Right ventricle myocardium superior (tissue), 1 donor: ENCODE measurements at regions of chr2 and their contacts with region 1.

Region 1: GRCh38 chr2:229586746-229587705 is 127.3 kb downstream of the DNER start:
- DNase-seq: peak; percentile 86
- ATAC-seq: peak; percentile 99

Region 2: DNA sequence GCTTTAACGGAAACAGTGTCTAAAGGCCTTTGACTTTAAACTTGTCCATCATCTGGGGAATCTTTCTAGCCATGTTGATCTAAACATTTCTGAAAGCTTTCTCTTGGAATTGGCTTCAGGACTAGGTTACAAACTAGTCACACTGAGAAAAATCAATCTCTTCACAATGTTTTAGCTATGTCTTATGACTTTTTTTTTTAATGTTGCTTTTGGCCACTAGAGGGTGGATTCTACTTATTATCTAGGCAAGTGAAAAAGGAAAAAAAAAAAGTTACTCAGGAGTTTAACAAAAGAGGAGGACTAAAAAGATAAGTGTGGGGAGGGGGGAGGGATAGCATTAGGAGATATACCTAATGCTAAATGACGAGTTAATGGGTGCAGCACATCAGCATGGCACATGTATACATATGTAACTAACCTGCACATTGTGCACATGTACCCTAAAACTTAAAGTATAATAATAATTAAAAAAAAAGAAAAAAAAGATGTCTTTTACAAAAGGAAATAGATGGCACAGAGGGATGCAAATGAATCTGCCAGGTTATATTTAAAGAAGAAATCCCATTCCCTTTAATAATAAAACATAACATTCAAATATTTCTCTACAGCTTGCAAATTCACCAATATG is 155.6 kb before region 1 on chr2:
- intact Hi-C with region 1: loop called (anchors 5 kb)
- DNase-seq: no peak
- ATAC-seq: peak; percentile 38